ENCODE measurements at regions of chr2 and their contacts with region 1.

Region 1: DNA sequence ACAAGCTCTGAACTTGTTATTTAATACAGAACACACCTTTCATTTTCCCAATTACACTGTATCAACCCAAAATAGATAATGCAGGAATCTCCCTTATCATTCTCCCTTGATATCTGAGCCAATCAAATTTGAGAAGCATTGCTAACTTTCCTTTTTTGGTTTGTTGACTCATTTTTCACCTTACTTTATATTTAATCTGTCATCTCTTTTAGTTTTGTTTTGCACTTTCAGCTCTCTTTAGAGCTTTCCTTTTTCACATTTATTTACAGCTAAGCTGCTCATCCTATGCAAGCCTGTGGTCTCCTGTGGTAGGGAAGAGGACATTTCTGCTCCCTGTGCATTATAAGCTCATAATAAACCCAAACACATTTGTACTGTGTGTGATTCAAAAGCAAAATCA is 50.1 kb downstream of the ITGAV start:
- DNase-seq: peak; percentile 20
- CTCF ChIP-seq: no peak

Region 2: DNA sequence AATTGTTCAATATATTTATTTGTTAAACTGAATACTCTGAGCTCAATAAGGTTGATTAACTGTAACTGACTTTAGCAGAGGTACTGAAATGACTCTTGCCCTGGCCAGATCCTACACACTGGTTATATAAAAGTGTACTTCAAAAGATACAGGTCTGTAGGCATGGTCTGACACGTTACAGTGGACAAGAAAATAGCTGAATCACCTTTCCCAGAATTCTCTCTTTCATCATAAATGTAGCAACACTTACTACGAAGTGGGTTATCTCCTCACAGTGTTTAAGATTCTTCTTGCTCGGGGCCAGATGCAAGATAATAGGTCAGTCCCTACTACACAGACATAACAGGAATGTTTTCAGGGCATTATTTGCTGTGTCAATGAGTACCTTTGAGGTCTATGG is 260.9 kb before region 1 on chr2:
- in situ Hi-C with region 1: no loop called
- DNase-seq: no peak
- CTCF ChIP-seq: no peak

Region 3: DNA sequence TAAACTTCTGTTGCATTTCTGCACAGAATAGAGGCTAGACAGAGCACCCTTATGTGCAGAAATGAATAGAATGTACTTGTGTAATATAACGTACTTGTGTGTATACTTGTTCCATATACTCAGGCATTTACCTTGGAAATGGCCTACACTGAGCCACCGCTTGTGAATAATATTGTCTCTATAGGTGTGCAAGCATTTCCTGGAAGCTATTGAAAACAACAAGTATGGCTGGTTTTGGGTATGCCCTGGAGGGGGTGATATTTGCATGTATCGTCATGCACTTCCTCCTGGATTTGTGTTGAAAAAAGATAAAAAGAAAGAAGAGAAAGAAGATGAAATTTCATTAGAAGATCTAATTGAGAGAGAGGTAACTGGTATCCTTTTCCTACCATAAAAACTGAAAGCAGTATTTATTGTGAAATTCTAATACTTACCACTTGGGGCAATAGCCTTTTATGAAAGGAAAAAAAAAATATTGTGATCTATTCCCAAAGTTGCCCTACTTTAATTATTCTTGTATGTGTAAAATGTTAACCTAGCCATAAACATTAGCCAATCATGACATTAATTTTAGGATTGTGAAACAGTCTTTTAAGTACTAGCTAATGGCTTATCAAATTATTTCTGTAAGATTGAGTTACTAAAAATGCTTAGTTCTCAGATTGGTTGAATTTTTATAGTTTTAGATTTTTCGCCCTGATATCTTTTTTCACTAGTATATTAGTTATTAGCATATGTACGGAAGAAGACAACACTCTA is 135.9 kb before region 1 on chr2:
- in situ Hi-C with region 1: loop called (anchors 10 kb)
- DNase-seq: no peak
- CTCF ChIP-seq: peak; percentile 39